Colonic mucosa (tissue), 4 donors: ENCODE measurements at regions of chr1 and their contacts with region 1.

Region 1: GRCh38 chr1:223748773-223749733 is 36.7 kb downstream of the CAPN2 start:
- DNase-seq: peak; percentile 66
- H3K4me3 ChIP-seq: peak overlapping the region; percentile 10
- H3K27ac ChIP-seq: peak overlapping the region; percentile 3
- H3K4me1 ChIP-seq: no peaks in the 10 kb centered on the region
- H3K27me3 ChIP-seq: no peaks in the 10 kb centered on the region
- CTCF ChIP-seq: peak; percentile 91

Region 2: DNA sequence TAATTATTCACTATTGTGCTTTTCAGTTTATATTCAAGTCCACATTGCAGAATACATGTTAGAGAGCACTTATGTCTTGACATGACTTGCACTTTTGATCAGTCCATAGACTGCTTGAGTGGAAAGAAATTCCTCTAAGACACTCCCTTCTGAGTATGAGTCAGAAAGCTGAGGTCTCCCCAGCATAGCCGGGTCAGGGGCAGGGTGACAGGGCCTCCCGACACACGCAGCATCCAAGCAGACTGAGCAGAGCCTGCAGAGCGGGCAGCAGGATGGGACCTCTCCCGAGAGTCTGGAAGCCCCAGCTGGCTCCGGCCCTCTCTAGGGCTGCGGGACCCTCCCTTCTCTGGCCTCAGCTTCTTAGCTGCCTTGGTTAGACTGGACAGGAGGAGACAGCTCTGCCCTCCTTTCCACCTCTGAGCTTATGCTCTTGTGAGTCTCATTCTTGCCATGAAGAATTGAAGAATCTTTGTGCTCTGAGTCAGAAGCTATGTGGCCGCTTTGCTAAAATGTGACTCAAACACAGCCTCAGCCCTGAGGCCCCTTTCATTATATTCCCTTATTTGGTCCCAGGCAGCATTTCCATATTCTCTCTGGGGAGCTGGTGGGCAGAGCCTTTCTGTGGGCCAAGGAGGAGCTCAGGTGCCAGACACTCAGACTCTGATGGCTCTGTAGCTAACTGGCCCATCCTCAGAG is 48.0 kb before region 1 on chr1:
- intact Hi-C with region 1: loop called (anchors 1 kb)
- DNase-seq: no peak
- H3K4me3 ChIP-seq: no peak overlapping the region
- H3K27ac ChIP-seq: peak overlapping the region; percentile 55
- H3K4me1 ChIP-seq: no peaks in the 10 kb centered on the region
- H3K27me3 ChIP-seq: no peaks in the 10 kb centered on the region
- CTCF ChIP-seq: no peak

Region 3: DNA sequence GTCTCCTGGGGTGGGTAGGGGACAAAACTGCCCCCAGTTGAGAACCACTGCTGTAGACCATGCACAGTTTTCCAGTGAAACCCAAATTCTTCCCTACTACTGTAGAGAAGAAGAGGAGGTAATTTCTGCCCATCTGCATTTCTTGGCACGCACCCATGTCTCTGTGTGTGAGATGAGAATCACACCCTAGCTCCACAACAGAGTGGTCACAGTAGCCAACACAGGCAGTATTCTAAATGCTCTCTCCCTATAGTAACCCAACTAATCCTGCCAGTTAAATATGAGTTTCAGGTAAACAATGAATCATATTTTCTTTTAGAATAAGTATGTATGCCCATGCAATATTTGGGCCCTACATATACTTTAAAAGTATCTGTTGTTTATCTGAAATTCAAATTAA is 37.9 kb before region 1 on chr1:
- intact Hi-C with region 1: loop called (anchors 2 kb)
- DNase-seq: peak; percentile 69
- H3K4me3 ChIP-seq: no peak overlapping the region
- H3K27ac ChIP-seq: peak overlapping the region; percentile 92
- H3K4me1 ChIP-seq: peaks cover 15% of the 10 kb centered on the region
- H3K27me3 ChIP-seq: no peaks in the 10 kb centered on the region
- CTCF ChIP-seq: no peak

Region 4: DNA sequence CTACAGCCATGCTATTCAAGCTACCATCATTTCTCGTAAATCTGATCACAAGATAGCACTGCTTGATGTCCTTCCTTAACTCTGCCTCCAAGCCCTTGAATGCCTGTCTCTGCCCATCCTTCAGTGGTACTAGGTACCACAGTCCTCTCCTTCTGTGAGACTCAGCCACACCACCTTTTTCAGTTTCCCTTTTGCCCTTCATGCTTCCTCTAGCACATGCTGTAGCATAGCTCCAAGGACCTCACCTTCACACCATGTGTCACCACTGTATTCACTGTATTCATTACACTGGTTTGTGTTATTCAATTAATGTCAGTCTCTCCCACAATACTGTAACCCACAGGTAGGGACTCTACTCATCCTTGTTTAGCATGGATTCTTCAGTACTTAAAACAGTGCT is 104.7 kb after region 1 on chr1:
- intact Hi-C with region 1: no loop called
- DNase-seq: no peak
- H3K4me3 ChIP-seq: no peak overlapping the region
- H3K27ac ChIP-seq: no peak overlapping the region
- H3K4me1 ChIP-seq: no peaks in the 10 kb centered on the region
- H3K27me3 ChIP-seq: no peaks in the 10 kb centered on the region
- CTCF ChIP-seq: no peak

Region 5: GRCh38 chr1:223864084-223864483 is 115.0 kb after region 1 on chr1:
- intact Hi-C with region 1: no loop called
- DNase-seq: no peak
- H3K4me3 ChIP-seq: no peak overlapping the region
- H3K27ac ChIP-seq: no peak overlapping the region
- H3K4me1 ChIP-seq: no peaks in the 10 kb centered on the region
- H3K27me3 ChIP-seq: no peaks in the 10 kb centered on the region
- CTCF ChIP-seq: no peak